ENCODE measurements at regions of chr1 and their contacts with region 1.

Region 1: DNA sequence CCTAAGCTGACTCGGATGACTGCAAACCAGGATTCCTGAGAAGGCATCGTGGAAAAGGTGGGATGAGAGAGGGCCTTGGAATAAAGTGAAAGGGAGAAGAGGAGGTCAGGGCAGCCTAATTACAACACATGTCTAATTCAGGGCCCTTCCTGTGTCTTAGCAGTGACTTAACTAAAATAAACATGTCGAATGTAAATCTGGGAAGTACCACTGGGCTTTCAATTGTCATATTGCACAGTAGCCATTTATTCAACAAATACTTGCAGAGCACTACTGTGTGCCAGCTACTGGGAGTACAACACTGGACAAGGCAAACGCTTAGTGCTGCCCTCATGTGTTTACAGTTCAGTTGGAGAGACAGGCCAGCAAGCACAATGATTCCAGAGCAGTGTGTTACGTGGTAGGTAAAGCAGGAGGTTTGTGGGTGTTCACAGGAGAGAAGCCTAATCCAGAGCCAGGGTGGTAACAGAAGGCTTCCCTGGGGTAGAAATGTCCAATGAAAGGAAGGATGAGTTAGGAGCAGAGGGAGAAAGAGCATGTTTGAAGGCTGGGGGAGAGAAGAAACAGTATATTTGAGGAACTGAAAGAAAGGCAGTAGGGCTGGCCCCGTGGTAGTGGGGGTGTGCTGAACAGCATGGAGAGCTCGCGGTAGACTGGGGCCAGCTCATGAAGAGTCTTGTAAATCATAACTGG is 38.0 kb upstream of the RASAL2 start:
- DNase-seq: peak; percentile 81
- ATAC-seq: peak; percentile 92
- H3K4me3 ChIP-seq: peak overlapping the region; percentile 25 to 54 (median 43); a peak in 5 of 6 replicates
- H3K27ac ChIP-seq: peak overlapping the region; percentile 58
- H3K4me1 ChIP-seq: peaks cover 80% of the 10 kb centered on the region
- H3K27me3 ChIP-seq: no peaks in the 10 kb centered on the region
- CTCF ChIP-seq: peak; percentile 85
- EP300 ChIP-seq: no peak
- POLR2A ChIP-seq: peak in 1 of 2 experiments; percentile 67; a peak in 2 of 4 replicates
- RAD21 ChIP-seq: 0 out of 2 replicates have a peak, but pooled peaks have one; percentile 27

Region 2: GRCh38 chr1:177959811-177960515 is 96.0 kb before region 1 on chr1:
- CTCF ChIA-PET with region 1: interaction called, 4 read pairs
- POLR2A ChIA-PET with region 1: no interaction called
- in situ Hi-C with region 1: no loop called
- intact Hi-C with region 1: loop called (anchors 2 kb)
- DNase-seq: peak; percentile 29
- ATAC-seq: peak; percentile 86
- H3K4me3 ChIP-seq: no peak overlapping the region
- H3K27ac ChIP-seq: no peak overlapping the region
- H3K4me1 ChIP-seq: no peaks in the 10 kb centered on the region
- H3K27me3 ChIP-seq: no peaks in the 10 kb centered on the region
- CTCF ChIP-seq: peak; percentile 62
- EP300 ChIP-seq: no peak
- POLR2A ChIP-seq: no peak
- RAD21 ChIP-seq: 0 out of 2 replicates have a peak, but pooled peaks have one; percentile 37

Region 3: GRCh38 chr1:178031856-178032320 is 24.0 kb before region 1 on chr1:
- CTCF ChIA-PET with region 1: interaction called, 7 read pairs
- POLR2A ChIA-PET with region 1: interaction called, 58 read pairs
- in situ Hi-C with region 1: no loop called
- intact Hi-C with region 1: loop called (anchors 1 kb)
- DNase-seq: peak; percentile 84
- ATAC-seq: peak; percentile 97
- H3K4me3 ChIP-seq: no peak overlapping the region
- H3K27ac ChIP-seq: no peak overlapping the region
- H3K4me1 ChIP-seq: peaks cover 58% of the 10 kb centered on the region
- H3K27me3 ChIP-seq: no peaks in the 10 kb centered on the region
- CTCF ChIP-seq: peak; percentile 89
- EP300 ChIP-seq: no peak
- POLR2A ChIP-seq: no peak
- RAD21 ChIP-seq: peak; percentile 90

Region 4: DNA sequence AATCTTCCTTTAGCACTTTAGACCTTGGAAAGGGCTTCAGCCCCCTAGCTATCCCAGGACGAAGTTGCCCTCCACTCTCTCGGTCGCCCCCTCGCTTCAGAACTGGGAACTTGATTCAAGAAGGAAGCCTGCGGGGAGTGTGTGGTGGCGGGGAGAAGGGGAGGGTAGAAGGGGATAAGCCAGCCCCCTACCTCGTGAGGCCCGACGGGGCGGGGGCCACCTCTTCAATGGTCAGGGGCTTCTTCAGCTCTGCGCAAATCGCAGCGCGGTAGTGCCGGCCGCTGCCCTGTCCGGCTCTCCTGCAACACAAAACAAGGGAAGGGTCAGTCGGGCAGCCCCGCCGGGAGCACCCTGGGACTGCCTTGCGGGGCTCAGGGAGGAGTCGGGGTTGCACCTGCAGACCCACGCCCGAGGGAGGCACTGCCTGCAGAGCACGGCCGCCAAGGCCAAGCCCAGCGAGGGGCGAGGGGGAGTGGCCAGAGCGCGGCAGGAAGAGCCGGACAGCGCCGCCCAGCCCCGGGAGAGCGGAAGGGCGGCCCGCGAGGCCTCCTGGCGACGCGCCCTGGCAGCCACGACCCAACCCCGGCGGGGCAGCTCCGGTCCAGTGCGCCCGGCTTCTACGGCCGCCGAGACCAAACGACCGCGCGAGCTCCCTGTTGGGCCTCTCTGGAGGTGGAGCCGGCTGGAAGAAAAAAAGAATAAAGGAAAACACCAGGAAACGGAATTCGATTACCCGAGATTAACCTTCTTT is 18.2 kb before region 1 on chr1:
- CTCF ChIA-PET with region 1: interaction called, 7 read pairs
- POLR2A ChIA-PET with region 1: interaction called, 58 read pairs
- in situ Hi-C with region 1: no loop called
- intact Hi-C with region 1: loop called (anchors 1 kb)
- DNase-seq: peak; percentile 67
- ATAC-seq: peak; percentile 99
- H3K4me3 ChIP-seq: peak overlapping the region; percentile 62 to 70 (median 67); a peak in 5 of 6 replicates
- H3K27ac ChIP-seq: peak overlapping the region; percentile 55
- H3K4me1 ChIP-seq: peaks cover 66% of the 10 kb centered on the region
- H3K27me3 ChIP-seq: no peaks in the 10 kb centered on the region
- CTCF ChIP-seq: peak; percentile 84
- EP300 ChIP-seq: no peak
- POLR2A ChIP-seq: peak in 1 of 2 experiments; percentile 76; a peak in 3 of 4 replicates
- RAD21 ChIP-seq: peak; percentile 90

Region 5: GRCh38 chr1:178093205-178093957 is 37.5 kb after region 1 on chr1:
- CTCF ChIA-PET with region 1: no interaction called
- POLR2A ChIA-PET with region 1: interaction called, 12 read pairs
- in situ Hi-C with region 1: no loop called
- intact Hi-C with region 1: loop called (anchors 1 kb)
- DNase-seq: peak; percentile 90
- ATAC-seq: peak; percentile 66
- H3K4me3 ChIP-seq: peak overlapping the region; percentile 92 to 97 (median 96)
- H3K27ac ChIP-seq: peak overlapping the region; percentile 77
- H3K4me1 ChIP-seq: peaks cover 62% of the 10 kb centered on the region
- H3K27me3 ChIP-seq: no peaks in the 10 kb centered on the region; a peak in 1 of 5 replicates
- CTCF ChIP-seq: no peak
- EP300 ChIP-seq: no peak
- POLR2A ChIP-seq: peak; percentile 40 to 60; a peak in 3 of 4 replicates
- RAD21 ChIP-seq: no peak

Region 6: GRCh38 chr1:178189814-178190213 is 133.9 kb after region 1 on chr1:
- CTCF ChIA-PET with region 1: interaction called, 3 read pairs
- POLR2A ChIA-PET with region 1: no interaction called
- in situ Hi-C with region 1: loop called (anchors 10 kb)
- intact Hi-C with region 1: loop called (anchors 1 kb)
- DNase-seq: peak; percentile 51
- ATAC-seq: peak; percentile 86
- H3K4me3 ChIP-seq: no peak overlapping the region
- H3K27ac ChIP-seq: no peak overlapping the region
- H3K4me1 ChIP-seq: peaks cover 4% of the 10 kb centered on the region; the same call in 1 of the 2 replicates
- H3K27me3 ChIP-seq: no peaks in the 10 kb centered on the region
- CTCF ChIP-seq: peak; percentile 86
- EP300 ChIP-seq: no peak
- POLR2A ChIP-seq: no peak
- RAD21 ChIP-seq: peak; percentile 70

Region 7: DNA sequence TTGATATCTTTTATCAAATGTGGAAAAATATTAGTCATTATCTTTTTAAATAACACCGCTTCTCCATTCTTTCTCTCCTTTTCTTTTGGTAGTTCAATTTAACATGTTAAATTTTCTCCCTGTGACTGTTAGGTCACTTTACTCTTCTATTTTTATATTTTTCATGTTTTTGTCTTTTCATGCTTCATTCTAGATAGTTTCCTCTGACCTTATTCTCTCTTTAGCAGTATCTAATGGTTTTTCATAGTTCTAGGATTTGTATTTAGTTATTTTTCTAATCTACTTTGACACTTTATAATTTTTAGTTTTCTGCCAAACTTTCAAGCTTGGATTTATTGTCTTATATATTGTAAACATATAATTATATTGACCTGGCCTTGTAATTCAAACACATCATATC is 154.0 kb after region 1 on chr1:
- CTCF ChIA-PET with region 1: no interaction called
- POLR2A ChIA-PET with region 1: no interaction called
- in situ Hi-C with region 1: no loop called
- intact Hi-C with region 1: no loop called
- DNase-seq: no peak
- ATAC-seq: no peak
- H3K4me3 ChIP-seq: no peak overlapping the region
- H3K27ac ChIP-seq: no peak overlapping the region
- H3K4me1 ChIP-seq: no peaks in the 10 kb centered on the region; the same call in 1 of the 2 replicates
- H3K27me3 ChIP-seq: no peaks in the 10 kb centered on the region
- CTCF ChIP-seq: no peak
- EP300 ChIP-seq: no peak
- POLR2A ChIP-seq: no peak
- RAD21 ChIP-seq: no peak

Region 8: GRCh38 chr1:178282949-178283367 is 227.0 kb after region 1 on chr1:
- CTCF ChIA-PET with region 1: no interaction called
- POLR2A ChIA-PET with region 1: no interaction called
- in situ Hi-C with region 1: no loop called
- intact Hi-C with region 1: loop called (anchors 2 kb)
- DNase-seq: peak; percentile 25
- ATAC-seq: no peak
- H3K4me3 ChIP-seq: no peak overlapping the region
- H3K27ac ChIP-seq: no peak overlapping the region
- H3K4me1 ChIP-seq: peaks cover 7% of the 10 kb centered on the region; the same call in 1 of the 2 replicates
- H3K27me3 ChIP-seq: no peaks in the 10 kb centered on the region
- CTCF ChIP-seq: peak; percentile 49
- EP300 ChIP-seq: no peak
- POLR2A ChIP-seq: no peak
- RAD21 ChIP-seq: no peak

Measured in HepG2 (cell line).